ENCODE measurements at regions of chr5 and their contacts with region 1.

Region 1: GRCh38 chr5:103119765-103120606 is at the starts of genes GIN1 and PPIP5K2:
- DNase-seq: peak; percentile 97
- H3K4me3 ChIP-seq: peak within 1 kb of the TSS; percentile 63
- H3K4me3 Mint-ChIP-seq: peak within 1 kb of the TSS; percentile 97
- H3K27ac Mint-ChIP-seq: peak within 1 kb of the TSS; percentile 100
- H3K4me1 ChIP-seq: no peaks in the 10 kb centered on the region
- H3K4me1 Mint-ChIP-seq: peaks cover 21% of the 10 kb centered on the region
- H3K27me3 ChIP-seq: no peaks in the 10 kb centered on the region
- H3K27me3 Mint-ChIP-seq: no peaks in the 10 kb centered on the region
- CTCF ChIP-seq: no peak
- total RNA-seq, gene GIN1: 7.0 and 8.1 TPM in 2 replicates
- total RNA-seq, gene PPIP5K2: 44.8 and 48.1 TPM in 2 replicates

Region 2: GRCh38 chr5:102296178-102296817 is 823.7 kb before region 1 on chr5 and contains the start of gene SLCO4C1:
- CTCF ChIA-PET with region 1: interaction called, 11 read pairs
- POLR2A ChIA-PET with region 1: no interaction called
- intact Hi-C with region 1: no loop called
- DNase-seq: peak; percentile 70 to 80
- H3K4me3 ChIP-seq: peak within 1 kb of the TSS; percentile 39
- H3K4me3 Mint-ChIP-seq: peak within 1 kb of the TSS; percentile 66
- H3K27ac Mint-ChIP-seq: no peak within 1 kb of the TSS
- H3K4me1 ChIP-seq: no peaks in the 10 kb centered on the region
- H3K4me1 Mint-ChIP-seq: no peaks in the 10 kb centered on the region
- H3K27me3 ChIP-seq: no peaks in the 10 kb centered on the region
- H3K27me3 Mint-ChIP-seq: no peaks in the 10 kb centered on the region
- CTCF ChIP-seq: peak in 1 of 2 experiments; percentile 60
- total RNA-seq, gene SLCO4C1: 1.3 and 1.5 TPM in 2 replicates

Region 3: GRCh38 chr5:102754767-102755431 is 365.1 kb before region 1 on chr5 and contains the start of gene PAM:
- CTCF ChIA-PET with region 1: no interaction called
- POLR2A ChIA-PET with region 1: interaction called, 3 read pairs
- intact Hi-C with region 1: loop called (anchors 2 kb)
- DNase-seq: peak; percentile 82 to 85
- H3K4me3 ChIP-seq: peak within 1 kb of the TSS; percentile 73
- H3K4me3 Mint-ChIP-seq: peak within 1 kb of the TSS; percentile 97
- H3K27ac Mint-ChIP-seq: peak within 1 kb of the TSS; percentile 93
- H3K4me1 ChIP-seq: peaks cover 3% of the 10 kb centered on the region; the same call in 1 of the 2 replicates
- H3K4me1 Mint-ChIP-seq: no peaks in the 10 kb centered on the region
- H3K27me3 ChIP-seq: no peaks in the 10 kb centered on the region
- H3K27me3 Mint-ChIP-seq: no peaks in the 10 kb centered on the region
- CTCF ChIP-seq: no peak
- total RNA-seq, gene PAM: 48.0 and 50.1 TPM in 2 replicates

Region 4: DNA sequence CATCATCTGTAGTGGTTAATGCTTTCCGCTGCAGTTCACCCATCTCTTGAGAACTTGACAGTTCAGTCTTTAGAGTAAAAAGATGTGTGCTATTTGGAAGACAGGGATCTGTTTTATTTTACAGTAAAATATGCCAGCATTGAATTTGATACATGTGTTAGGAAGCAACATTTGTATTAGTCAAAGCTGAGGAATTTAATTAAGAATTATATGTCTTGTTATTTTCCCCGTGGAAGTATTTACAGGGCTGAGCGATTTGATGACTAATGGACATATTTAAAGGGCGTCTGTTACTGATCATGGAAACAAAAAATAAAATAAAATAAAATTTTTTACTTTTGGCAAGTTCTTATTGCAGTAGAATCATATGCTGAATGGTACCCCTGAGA is 263.6 kb before region 1 on chr5:
- CTCF ChIA-PET with region 1: no interaction called
- POLR2A ChIA-PET with region 1: no interaction called
- intact Hi-C with region 1: no loop called
- DNase-seq: no peak
- H3K4me3 ChIP-seq: no peak overlapping the region
- H3K4me3 Mint-ChIP-seq: no peak overlapping the region
- H3K27ac Mint-ChIP-seq: no peak overlapping the region
- H3K4me1 ChIP-seq: no peaks in the 10 kb centered on the region
- H3K4me1 Mint-ChIP-seq: no peaks in the 10 kb centered on the region
- H3K27me3 ChIP-seq: no peaks in the 10 kb centered on the region
- H3K27me3 Mint-ChIP-seq: no peaks in the 10 kb centered on the region
- CTCF ChIP-seq: no peak

Region 5: GRCh38 chr5:103057208-103058130 is 62.5 kb before region 1 on chr5:
- CTCF ChIA-PET with region 1: no interaction called
- POLR2A ChIA-PET with region 1: no interaction called
- intact Hi-C with region 1: loop called (anchors 1 kb)
- DNase-seq: peak; percentile 63
- H3K4me3 ChIP-seq: no peak overlapping the region
- H3K4me3 Mint-ChIP-seq: peak overlapping the region; percentile 26
- H3K27ac Mint-ChIP-seq: peak overlapping the region; percentile 83
- H3K4me1 ChIP-seq: peaks cover 50% of the 10 kb centered on the region
- H3K4me1 Mint-ChIP-seq: peaks cover 37% of the 10 kb centered on the region
- H3K27me3 ChIP-seq: no peaks in the 10 kb centered on the region
- H3K27me3 Mint-ChIP-seq: no peaks in the 10 kb centered on the region
- CTCF ChIP-seq: no peak

Region 6: GRCh38 chr5:103098993-103099392 is 21.0 kb before region 1 on chr5:
- CTCF ChIA-PET with region 1: no interaction called
- POLR2A ChIA-PET with region 1: interaction called, 5 read pairs
- intact Hi-C with region 1: loop called (anchors 1 kb)
- DNase-seq: no peak
- H3K4me3 ChIP-seq: no peak overlapping the region
- H3K4me3 Mint-ChIP-seq: no peak overlapping the region
- H3K27ac Mint-ChIP-seq: no peak overlapping the region
- H3K4me1 ChIP-seq: no peaks in the 10 kb centered on the region
- H3K4me1 Mint-ChIP-seq: peaks cover 6% of the 10 kb centered on the region
- H3K27me3 ChIP-seq: no peaks in the 10 kb centered on the region
- H3K27me3 Mint-ChIP-seq: no peaks in the 10 kb centered on the region
- CTCF ChIP-seq: no peak

Region 7: GRCh38 chr5:103139264-103139865 is 19.4 kb after region 1 on chr5:
- CTCF ChIA-PET with region 1: interaction called, 3 read pairs
- POLR2A ChIA-PET with region 1: no interaction called
- intact Hi-C with region 1: loop called (anchors 1 kb)
- DNase-seq: peak; percentile 78 to 84
- H3K4me3 ChIP-seq: no peak overlapping the region
- H3K4me3 Mint-ChIP-seq: no peak overlapping the region
- H3K27ac Mint-ChIP-seq: no peak overlapping the region
- H3K4me1 ChIP-seq: peaks cover 22% of the 10 kb centered on the region
- H3K4me1 Mint-ChIP-seq: no peaks in the 10 kb centered on the region
- H3K27me3 ChIP-seq: no peaks in the 10 kb centered on the region
- H3K27me3 Mint-ChIP-seq: no peaks in the 10 kb centered on the region
- CTCF ChIP-seq: peak; percentile 92 to 93

Region 8: DNA sequence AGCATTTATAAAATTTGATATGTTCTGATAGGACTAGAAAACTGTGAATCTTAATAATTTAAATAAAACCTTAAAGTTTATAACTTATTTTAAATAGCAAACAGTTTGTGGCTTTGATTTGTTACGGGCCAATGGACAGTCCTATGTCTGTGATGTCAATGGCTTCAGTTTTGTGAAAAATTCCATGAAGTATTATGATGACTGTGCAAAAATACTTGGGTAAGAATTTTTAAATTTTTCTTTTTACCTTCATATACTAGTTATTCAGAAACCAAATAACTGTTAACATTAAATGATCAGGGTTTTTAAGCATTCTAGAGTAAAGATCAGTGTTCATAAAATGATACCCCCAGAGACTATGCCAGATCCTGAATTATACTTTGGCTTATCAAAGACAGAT is 31.2 kb after region 1 on chr5:
- CTCF ChIA-PET with region 1: no interaction called
- POLR2A ChIA-PET with region 1: no interaction called
- intact Hi-C with region 1: no loop called
- DNase-seq: no peak
- H3K4me3 ChIP-seq: no peak overlapping the region
- H3K4me3 Mint-ChIP-seq: no peak overlapping the region
- H3K27ac Mint-ChIP-seq: no peak overlapping the region
- H3K4me1 ChIP-seq: no peaks in the 10 kb centered on the region
- H3K4me1 Mint-ChIP-seq: no peaks in the 10 kb centered on the region
- H3K27me3 ChIP-seq: no peaks in the 10 kb centered on the region
- H3K27me3 Mint-ChIP-seq: no peaks in the 10 kb centered on the region
- CTCF ChIP-seq: no peak